ENCODE measurements at regions of chr2 and their contacts with region 1.

Region 1: GRCh38 chr2:12950957-12951656 is 234.4 kb downstream of the TRIB2 start:
- DNase-seq: peak; percentile 67
- ATAC-seq: peak; percentile 22; the same call in 1 of the 2 replicates
- H3K4me3 ChIP-seq: no peak overlapping the region
- H3K27ac ChIP-seq: no peak overlapping the region
- H3K4me1 ChIP-seq: peaks cover 30% of the 10 kb centered on the region
- H3K27me3 ChIP-seq: no peaks in the 10 kb centered on the region
- CTCF ChIP-seq: no peak

Region 2: GRCh38 chr2:11829947-11830707 is 1121.0 kb before region 1 on chr2:
- CTCF ChIA-PET with region 1: no interaction called
- POLR2A ChIA-PET with region 1: no interaction called
- intact Hi-C with region 1: no loop called
- DNase-seq: peak; percentile 98
- ATAC-seq: peak; percentile 85
- H3K4me3 ChIP-seq: peak overlapping the region; percentile 58
- H3K27ac ChIP-seq: peak overlapping the region; percentile 94
- H3K4me1 ChIP-seq: peaks cover 23% of the 10 kb centered on the region
- H3K27me3 ChIP-seq: no peaks in the 10 kb centered on the region
- CTCF ChIP-seq: peak; percentile 77

Region 3: DNA sequence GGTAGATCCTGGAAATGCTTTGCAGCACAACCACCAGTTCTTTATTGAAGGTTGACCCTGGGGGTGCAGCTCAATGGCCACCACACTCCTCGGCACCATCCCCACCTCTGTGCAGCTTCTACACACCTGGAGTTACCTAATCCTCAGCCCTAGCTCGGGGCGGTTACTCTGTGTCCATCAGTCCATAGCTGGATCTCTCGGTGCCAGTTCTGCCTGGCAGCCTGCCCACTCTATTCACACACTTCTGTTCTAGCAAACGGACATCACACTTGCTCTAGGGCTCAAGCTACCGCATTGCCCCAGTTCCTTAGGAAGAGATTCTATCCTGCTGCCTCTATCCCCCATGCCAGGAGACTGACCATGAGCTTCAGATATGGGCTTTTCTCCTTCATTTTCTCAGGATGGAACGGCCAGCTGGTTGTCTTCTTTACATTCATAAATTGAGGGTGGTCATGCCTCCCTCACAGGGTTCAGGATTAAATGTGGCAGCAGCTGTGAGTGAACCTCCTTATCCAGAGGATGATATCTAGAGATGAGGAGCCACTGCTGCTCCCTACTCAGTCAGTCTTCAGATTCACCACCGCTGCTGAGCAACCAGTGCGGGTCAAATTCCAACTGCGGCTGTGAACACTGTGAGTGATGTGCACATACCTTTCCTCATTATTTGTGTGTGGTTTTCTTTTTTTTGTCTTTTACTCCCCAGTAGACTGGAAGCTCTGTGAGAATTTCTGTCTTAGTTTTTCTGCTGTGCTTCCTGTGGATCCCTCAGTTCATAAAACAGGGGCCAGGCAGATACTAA is 301.3 kb before region 1 on chr2:
- CTCF ChIA-PET with region 1: no interaction called
- POLR2A ChIA-PET with region 1: no interaction called
- intact Hi-C with region 1: no loop called
- DNase-seq: no peak
- ATAC-seq: no peak
- H3K4me3 ChIP-seq: no peak overlapping the region
- H3K27ac ChIP-seq: no peak overlapping the region
- H3K4me1 ChIP-seq: no peaks in the 10 kb centered on the region
- H3K27me3 ChIP-seq: no peaks in the 10 kb centered on the region
- CTCF ChIP-seq: no peak

Region 4: GRCh38 chr2:12998685-12999084 is 47.6 kb after region 1 on chr2:
- CTCF ChIA-PET with region 1: no interaction called
- POLR2A ChIA-PET with region 1: no interaction called
- intact Hi-C with region 1: loop called (anchors 2 kb)
- DNase-seq: no peak
- ATAC-seq: no peak
- H3K4me3 ChIP-seq: no peak overlapping the region
- H3K27ac ChIP-seq: no peak overlapping the region
- H3K4me1 ChIP-seq: no peaks in the 10 kb centered on the region
- H3K27me3 ChIP-seq: no peaks in the 10 kb centered on the region
- CTCF ChIP-seq: no peak

Region 5: DNA sequence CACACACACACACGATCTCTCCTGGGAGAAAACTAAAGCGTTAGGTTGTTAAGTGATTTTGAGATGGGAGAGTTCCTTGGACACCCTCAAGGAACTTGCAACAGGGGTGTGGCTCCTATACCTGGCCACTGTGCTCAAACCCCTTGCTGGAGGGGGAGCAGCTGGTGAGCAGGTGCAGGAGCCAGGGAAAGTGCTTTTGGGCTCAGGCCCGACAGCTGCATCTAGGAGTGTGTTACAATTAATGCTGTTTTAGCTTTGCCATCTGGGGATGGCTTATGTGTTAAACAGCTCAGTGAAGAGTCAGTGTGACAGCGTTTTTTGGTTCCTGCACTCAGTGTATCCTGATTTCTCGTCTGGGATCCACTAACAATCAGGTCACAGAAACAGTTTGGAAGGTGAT is 276.5 kb after region 1 on chr2:
- CTCF ChIA-PET with region 1: no interaction called
- POLR2A ChIA-PET with region 1: no interaction called
- intact Hi-C with region 1: no loop called
- DNase-seq: no peak
- ATAC-seq: no peak
- H3K4me3 ChIP-seq: no peak overlapping the region
- H3K27ac ChIP-seq: no peak overlapping the region
- H3K4me1 ChIP-seq: no peaks in the 10 kb centered on the region
- H3K27me3 ChIP-seq: peaks cover 23% of the 10 kb centered on the region
- CTCF ChIP-seq: no peak